Activated naive CD4-positive, alpha-beta T cell treated with anti-CD3 and anti-CD28 coated beads for 36 hours (primary cell): ENCODE measurements at regions of chr15 and their contacts with region 1.

Region 1: DNA sequence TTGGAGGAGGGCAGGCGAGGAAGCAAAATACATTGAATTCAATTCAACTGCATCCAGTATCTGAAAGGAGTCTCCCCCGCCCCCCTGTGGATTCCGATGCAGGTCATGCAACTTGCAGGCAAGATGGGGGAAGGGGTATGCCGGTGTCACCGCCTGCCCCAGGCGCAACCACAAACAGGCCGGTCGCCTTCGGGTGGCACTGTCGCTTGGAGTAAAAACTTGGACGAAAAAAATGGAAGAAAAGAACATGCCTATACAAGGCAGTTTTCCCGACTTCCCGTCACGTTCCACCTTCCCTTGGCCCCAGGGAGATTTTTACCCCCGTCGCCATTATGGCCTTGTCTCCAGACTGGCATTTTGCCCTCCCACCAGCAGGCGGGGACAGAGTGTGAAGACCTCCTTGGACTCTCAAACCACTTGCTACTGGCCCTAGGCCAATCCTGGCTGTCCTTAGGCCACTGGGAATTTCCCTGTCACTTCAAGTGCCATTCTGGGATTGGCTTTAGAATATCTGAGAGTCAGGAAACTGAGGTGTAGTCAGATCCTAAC is 1.6 kb upstream of the NTRK3 start:
- DNase-seq: peak; percentile 57
- H3K4me3 Mint-ChIP-seq: peak overlapping the region; percentile 84
- H3K27ac Mint-ChIP-seq: peak overlapping the region; percentile 19
- H3K4me1 Mint-ChIP-seq: peaks cover 27% of the 10 kb centered on the region
- H3K27me3 Mint-ChIP-seq: peaks cover 61% of the 10 kb centered on the region

Region 2: GRCh38 chr15:88166082-88166993 is 91.8 kb before region 1 on chr15:
- CTCF ChIA-PET with region 1: no interaction called
- intact Hi-C with region 1: no loop called
- DNase-seq: peak; percentile 25
- H3K4me3 Mint-ChIP-seq: no peak overlapping the region
- H3K27ac Mint-ChIP-seq: no peak overlapping the region
- H3K4me1 Mint-ChIP-seq: no peaks in the 10 kb centered on the region
- H3K27me3 Mint-ChIP-seq: peaks cover 1% of the 10 kb centered on the region

Region 3: GRCh38 chr15:88187153-88187552 is 71.0 kb before region 1 on chr15:
- CTCF ChIA-PET with region 1: no interaction called
- intact Hi-C with region 1: no loop called
- DNase-seq: no peak
- H3K4me3 Mint-ChIP-seq: no peak overlapping the region
- H3K27ac Mint-ChIP-seq: no peak overlapping the region
- H3K4me1 Mint-ChIP-seq: no peaks in the 10 kb centered on the region
- H3K27me3 Mint-ChIP-seq: no peaks in the 10 kb centered on the region

Region 4: DNA sequence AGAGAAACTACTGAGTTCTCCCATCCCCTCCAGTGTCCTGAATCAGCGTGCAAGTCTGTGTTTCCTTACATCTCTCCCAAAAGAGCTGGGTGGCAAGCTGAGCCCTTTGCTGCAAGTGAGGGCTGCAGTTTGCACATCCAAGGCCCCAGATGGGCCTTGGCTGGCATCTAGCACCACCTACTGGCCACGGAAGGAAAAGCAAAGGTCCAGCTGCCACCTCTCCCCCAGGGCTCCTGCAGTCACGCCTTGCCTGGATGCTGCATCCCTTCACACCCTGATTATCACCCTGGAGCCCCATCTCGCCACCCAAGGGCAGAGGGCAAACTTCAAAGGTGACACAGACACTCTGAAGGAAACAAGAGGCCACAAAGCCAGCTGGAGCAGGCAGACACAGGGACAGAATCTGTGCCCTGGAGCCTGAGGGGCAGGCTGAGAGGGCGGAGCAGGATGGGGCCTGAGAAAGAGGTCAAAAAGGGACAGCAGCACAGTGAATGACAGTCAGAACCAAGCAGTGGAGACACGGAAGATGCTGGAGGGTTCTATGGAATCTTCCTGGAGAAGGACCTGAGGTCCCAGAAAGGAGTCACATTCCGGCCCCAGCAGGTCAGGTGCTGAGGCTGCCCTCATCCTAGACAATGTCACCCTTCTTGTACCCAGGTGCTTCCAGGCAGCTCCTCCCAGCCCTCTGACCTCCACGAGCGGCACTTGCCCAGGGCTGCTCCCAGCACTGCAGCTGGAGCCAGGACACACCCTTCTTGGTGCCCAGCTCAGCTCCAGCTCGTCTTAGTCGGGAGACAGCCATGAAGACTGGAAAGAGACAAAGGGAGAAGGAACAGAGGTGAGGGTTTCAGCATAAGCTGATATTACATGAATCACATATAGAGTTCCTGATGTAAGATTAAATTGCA is 16.6 kb after region 1 on chr15:
- CTCF ChIA-PET with region 1: interaction called, 13 read pairs
- intact Hi-C with region 1: no loop called
- DNase-seq: peak; percentile 80
- H3K4me3 Mint-ChIP-seq: no peak overlapping the region
- H3K27ac Mint-ChIP-seq: no peak overlapping the region
- H3K4me1 Mint-ChIP-seq: no peaks in the 10 kb centered on the region
- H3K27me3 Mint-ChIP-seq: peaks cover 11% of the 10 kb centered on the region